Panc1 (cell line): ENCODE measurements at regions of chr5 and their contacts with region 1.

Region 1: GRCh38 chr5:19608444-19609002 is 379.5 kb downstream of the CDH18 start:
- DNase-seq: peak; percentile 15
- ATAC-seq: no peak
- H3K4me3 ChIP-seq: no peak overlapping the region
- H3K27ac ChIP-seq: no peak overlapping the region
- H3K4me1 ChIP-seq: no peaks in the 10 kb centered on the region; the same call in 1 of the 2 replicates
- H3K27me3 ChIP-seq: no peaks in the 10 kb centered on the region
- CTCF ChIP-seq: no peak; the same call in 1 of the 2 replicates

Region 2: GRCh38 chr5:18553269-18553668 is 1055.3 kb before region 1 on chr5:
- CTCF ChIA-PET with region 1: no interaction called
- POLR2A ChIA-PET with region 1: interaction called, 11 read pairs
- in situ Hi-C with region 1: no loop called
- intact Hi-C with region 1: no loop called
- DNase-seq: peak; percentile 58
- ATAC-seq: peak; percentile 72
- H3K4me3 ChIP-seq: no peak overlapping the region
- H3K27ac ChIP-seq: no peak overlapping the region
- H3K4me1 ChIP-seq: no peaks in the 10 kb centered on the region
- H3K27me3 ChIP-seq: no peaks in the 10 kb centered on the region
- CTCF ChIP-seq: no peak

Region 3: GRCh38 chr5:20559845-20560244 is 951.3 kb after region 1 on chr5:
- CTCF ChIA-PET with region 1: no interaction called
- POLR2A ChIA-PET with region 1: no interaction called
- in situ Hi-C with region 1: no loop called
- intact Hi-C with region 1: no loop called
- DNase-seq: no peak
- ATAC-seq: no peak
- H3K4me3 ChIP-seq: no peak overlapping the region
- H3K27ac ChIP-seq: no peak overlapping the region
- H3K4me1 ChIP-seq: no peaks in the 10 kb centered on the region
- H3K27me3 ChIP-seq: no peaks in the 10 kb centered on the region
- CTCF ChIP-seq: no peak